ENCODE measurements at regions of chr9 and their contacts with region 1.

Region 1: GRCh38 chr9:137227063-137227852 is at the start of gene RNF224:
- DNase-seq: peak; percentile 89
- CTCF ChIP-seq: peak; percentile 97

Region 2: DNA sequence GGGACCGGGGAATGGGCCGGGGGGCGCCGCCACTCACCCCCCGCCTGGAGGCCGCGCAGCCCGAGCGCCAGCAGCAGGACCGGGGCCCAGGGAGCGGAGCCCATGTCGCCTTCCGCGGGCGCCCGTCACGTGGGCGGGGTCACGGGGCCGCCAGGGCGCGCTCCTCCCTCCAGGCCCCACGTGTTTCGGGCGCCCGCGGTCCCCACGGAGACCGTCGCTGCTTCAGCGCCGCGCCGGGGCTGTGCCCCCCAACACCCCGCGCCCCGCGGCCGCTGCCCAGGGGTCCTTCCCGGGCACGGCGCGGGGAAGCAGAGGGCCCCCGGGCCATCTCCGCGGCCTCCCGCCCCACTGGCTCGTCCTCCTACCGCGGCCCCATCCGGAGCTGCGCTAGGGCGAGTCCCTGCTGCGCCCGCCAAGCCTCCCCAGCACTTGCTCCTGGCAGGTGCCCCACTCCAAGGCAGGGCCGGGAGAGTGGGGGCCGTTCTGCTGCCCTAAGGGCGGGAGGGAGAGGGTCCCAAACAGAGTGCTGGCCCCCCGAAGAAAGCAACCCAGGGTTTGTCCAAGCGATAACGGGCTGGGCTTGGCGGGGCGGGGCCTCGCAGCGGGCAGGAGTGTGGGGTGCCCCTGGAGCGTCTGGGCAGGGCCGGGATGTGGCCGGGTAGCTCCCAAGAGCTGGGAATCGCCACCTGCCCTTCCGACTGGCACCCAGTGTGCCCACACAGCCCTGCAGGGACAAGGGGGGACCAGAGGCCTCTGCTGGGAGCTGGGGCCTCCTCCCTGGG is 112.5 kb before region 1 on chr9 and contains the start of gene DPP7:
- in situ Hi-C with region 1: loop called (anchors 5 kb)
- DNase-seq: peak; percentile 96
- CTCF ChIP-seq: no peak

Measured in GM13976 (cell line).